ENCODE measurements at regions of chr3 and their contacts with region 1.

Region 1: GRCh38 chr3:143832433-143832832 is 15.8 kb downstream of the SLC9A9 start:
- DNase-seq: peak in 2 of 9 experiments; percentile 8 to 36
- ATAC-seq: no peak
- H3K4me3 ChIP-seq: no peak overlapping the region
- H3K4me3 Mint-ChIP-seq: no peak overlapping the region
- H3K27ac ChIP-seq: no peak overlapping the region
- H3K27ac Mint-ChIP-seq: no peak overlapping the region
- H3K4me1 ChIP-seq: no peaks in the 10 kb centered on the region
- H3K4me1 Mint-ChIP-seq: peaks cover 6% of the 10 kb centered on the region
- H3K27me3 ChIP-seq: no peaks in the 10 kb centered on the region
- H3K27me3 Mint-ChIP-seq: no peaks in the 10 kb centered on the region
- CTCF ChIP-seq: no peak

Region 2: GRCh38 chr3:143847787-143848631 is 15.6 kb after region 1 on chr3 and contains the start of gene SLC9A9:
- CTCF ChIA-PET with region 1: no interaction called
- POLR2A ChIA-PET with region 1: no interaction called
- intact Hi-C with region 1: loop called in 1 of 2 experiments (anchors 1 kb)
- DNase-seq: peak in 8 of 9 experiments; percentile 7 to 65 (median 32)
- ATAC-seq: peak; percentile 87
- H3K4me3 ChIP-seq: peak within 1 kb of the TSS; percentile 57 to 74
- H3K4me3 Mint-ChIP-seq: peak within 1 kb of the TSS; percentile 96
- H3K27ac ChIP-seq: peak within 1 kb of the TSS; percentile 27 to 67
- H3K27ac Mint-ChIP-seq: peak within 1 kb of the TSS; percentile 91
- H3K4me1 ChIP-seq: peaks cover 24% of the 10 kb centered on the region
- H3K4me1 Mint-ChIP-seq: peaks cover 53% of the 10 kb centered on the region
- H3K27me3 ChIP-seq: no peaks in the 10 kb centered on the region
- H3K27me3 Mint-ChIP-seq: no peaks in the 10 kb centered on the region
- CTCF ChIP-seq: no peak
- total RNA-seq, gene SLC9A9: 6.8 to 7.5 TPM

Measured in CD8-positive, alpha-beta T cell (primary cell).